Calu3 (cell line): ENCODE measurements at regions of chr6 and their contacts with region 1.

Region 1: GRCh38 chr6:138161338-138162110 is at the start of gene ARFGEF3:
- DNase-seq: peak; percentile 69
- H3K4me3 Mint-ChIP-seq: peak within 1 kb of the TSS; percentile 87
- H3K27ac Mint-ChIP-seq: peak within 1 kb of the TSS; percentile 66
- H3K4me1 Mint-ChIP-seq: peaks cover 24% of the 10 kb centered on the region
- H3K27me3 Mint-ChIP-seq: no peaks in the 10 kb centered on the region
- CTCF ChIP-seq: no peak
- total RNA-seq, gene ARFGEF3: 15.4 and 16.3 TPM in 2 replicates

Region 2: GRCh38 chr6:138231381-138231897 is 69.9 kb after region 1 on chr6:
- CTCF ChIA-PET with region 1: no interaction called
- intact Hi-C with region 1: loop called (anchors 5 kb)
- DNase-seq: peak; percentile 30
- H3K4me3 Mint-ChIP-seq: peak overlapping the region; percentile 29
- H3K27ac Mint-ChIP-seq: peak overlapping the region; percentile 95
- H3K4me1 Mint-ChIP-seq: peaks cover 48% of the 10 kb centered on the region
- H3K27me3 Mint-ChIP-seq: no peaks in the 10 kb centered on the region
- CTCF ChIP-seq: no peak